ENCODE measurements at regions of chrX and their contacts with region 1.

Region 1: DNA sequence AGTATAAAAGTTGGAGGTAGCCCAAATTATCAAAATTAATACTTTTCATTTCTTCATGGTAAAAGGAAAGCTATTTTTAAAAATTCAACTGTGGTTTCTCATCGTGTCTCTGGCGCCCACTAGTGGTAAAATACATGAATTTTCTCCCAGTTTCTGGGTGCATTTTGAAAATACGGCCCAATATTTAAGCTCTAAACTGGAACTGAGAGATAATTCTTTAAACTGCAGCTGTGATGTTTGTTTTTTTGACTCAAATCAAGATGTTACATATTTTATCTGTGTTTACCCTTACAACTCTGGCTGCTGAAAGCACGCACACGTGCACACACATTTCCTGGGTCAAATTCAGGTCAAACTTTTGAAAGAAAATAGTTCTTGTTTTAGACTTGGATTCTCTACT is 123.9 kb upstream of the ACSL4 start:
- DNase-seq: peak; percentile 34
- H3K4me3 Mint-ChIP-seq: no peak overlapping the region
- H3K27ac Mint-ChIP-seq: no peak overlapping the region
- H3K4me1 Mint-ChIP-seq: peaks cover 7% of the 10 kb centered on the region
- H3K27me3 Mint-ChIP-seq: peaks cover 2% of the 10 kb centered on the region

Region 2: GRCh38 chrX:109714340-109714958 is 142.5 kb before region 1 on chrX:
- CTCF ChIA-PET with region 1: interaction called, 22 read pairs
- POLR2A ChIA-PET with region 1: no interaction called
- DNase-seq: no peak
- H3K4me3 Mint-ChIP-seq: no peak overlapping the region
- H3K27ac Mint-ChIP-seq: no peak overlapping the region
- H3K4me1 Mint-ChIP-seq: peaks cover 21% of the 10 kb centered on the region
- H3K27me3 Mint-ChIP-seq: no peaks in the 10 kb centered on the region